Breast epithelium (tissue), 4 donors: ENCODE measurements at regions of chr10 and their contacts with region 1.

Region 1: GRCh38 chr10:52268790-52269189 is 45.3 kb upstream of the DKK1 start:
- DNase-seq: no peak
- H3K4me3 ChIP-seq: no peak overlapping the region
- H3K27ac ChIP-seq: no peak overlapping the region
- H3K4me1 ChIP-seq: no peaks in the 10 kb centered on the region
- H3K27me3 ChIP-seq: no peaks in the 10 kb centered on the region
- CTCF ChIP-seq: no peak
- POLR2A ChIP-seq: no peak

Region 2: GRCh38 chr10:51231754-51232153 is 1037.0 kb before region 1 on chr10:
- intact Hi-C with region 1: no loop called
- DNase-seq: no peak
- H3K4me3 ChIP-seq: no peak overlapping the region
- H3K27ac ChIP-seq: no peak overlapping the region
- H3K4me1 ChIP-seq: no peaks in the 10 kb centered on the region
- H3K27me3 ChIP-seq: no peaks in the 10 kb centered on the region
- CTCF ChIP-seq: no peak
- POLR2A ChIP-seq: no peak

Region 3: DNA sequence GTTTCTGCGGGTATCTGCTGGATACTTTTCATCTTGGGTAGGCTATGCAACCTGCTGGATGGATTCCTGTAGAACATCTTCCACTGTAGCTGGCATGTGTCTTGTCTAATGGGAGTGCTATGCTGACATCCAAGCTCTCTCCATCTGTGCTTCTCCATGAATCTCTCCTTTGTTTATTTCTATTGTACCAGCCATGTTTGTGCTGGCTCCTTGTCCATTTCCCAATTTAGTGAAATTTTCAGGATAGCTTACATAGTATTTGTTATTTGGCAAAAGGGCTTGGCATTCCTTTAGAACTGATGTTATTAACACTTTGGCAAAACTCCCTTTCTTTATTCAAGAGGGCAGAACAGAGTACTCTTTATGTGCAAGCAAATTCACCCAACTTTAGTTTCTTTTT is 767.4 kb before region 1 on chr10:
- intact Hi-C with region 1: no loop called
- DNase-seq: peak in 1 of 2 donors; percentile 29
- H3K4me3 ChIP-seq: no peak overlapping the region
- H3K27ac ChIP-seq: peak overlapping the region in 1 of 2 donors; percentile 33
- H3K4me1 ChIP-seq: no peaks in the 10 kb centered on the region
- H3K27me3 ChIP-seq: no peaks in the 10 kb centered on the region
- CTCF ChIP-seq: no peak
- POLR2A ChIP-seq: no peak

Region 4: DNA sequence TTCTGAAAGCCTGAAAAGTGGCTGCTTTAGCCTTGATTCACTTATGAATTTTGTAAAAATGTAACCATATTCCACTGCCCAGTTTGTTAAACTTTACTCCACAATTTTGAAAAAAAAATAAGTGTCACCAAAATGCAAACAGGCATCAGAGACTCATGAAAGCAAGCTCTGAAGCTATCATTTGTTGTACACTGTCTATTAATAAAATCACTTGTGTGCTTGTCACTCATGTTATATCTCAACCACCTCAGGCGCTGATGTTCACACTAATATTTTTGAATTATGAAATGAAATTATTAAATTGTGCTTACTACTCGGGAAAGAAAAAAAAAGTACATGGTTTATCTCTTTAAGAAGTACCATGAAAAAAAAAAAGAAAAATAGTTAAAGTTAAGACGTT is 10.8 kb after region 1 on chr10:
- intact Hi-C with region 1: loop called (anchors 1 kb)
- DNase-seq: no peak
- H3K4me3 ChIP-seq: no peak overlapping the region
- H3K27ac ChIP-seq: no peak overlapping the region
- H3K4me1 ChIP-seq: no peaks in the 10 kb centered on the region
- H3K27me3 ChIP-seq: no peaks in the 10 kb centered on the region
- CTCF ChIP-seq: no peak
- POLR2A ChIP-seq: no peak